ENCODE measurements at regions of chr22 and their contacts with region 1.

Region 1: GRCh38 chr22:42581762-42582716 is 28.3 kb downstream of the SERHL2 start:
- DNase-seq: peak; percentile 70 to 87 (median 76)
- ATAC-seq: peak; percentile 97
- H3K4me3 ChIP-seq: peak overlapping the region; percentile 57
- H3K27ac ChIP-seq: peak overlapping the region; percentile 74
- H3K4me1 ChIP-seq: peaks cover 0 to 7% of the 10 kb centered on the region in 2 experiments; a peak in 2 of 5 replicates
- H3K27me3 ChIP-seq: no peaks in the 10 kb centered on the region
- CTCF ChIP-seq: no peak
- EP300 ChIP-seq: no peak
- POLR2A ChIP-seq: peak; percentile 71
- RAD21 ChIP-seq: no peak

Region 2: GRCh38 chr22:42331014-42331413 is 251.0 kb before region 1 on chr22:
- CTCF ChIA-PET with region 1: no interaction called
- POLR2A ChIA-PET with region 1: no interaction called
- in situ Hi-C with region 1: no loop called
- intact Hi-C with region 1: no loop called
- DNase-seq: no peak
- ATAC-seq: peak; percentile 61; the same call in 2 of the 3 replicates
- H3K4me3 ChIP-seq: no peak overlapping the region
- H3K27ac ChIP-seq: no peak overlapping the region
- H3K4me1 ChIP-seq: peaks cover 0 to 23% of the 10 kb centered on the region in 2 experiments; a peak in 2 of 5 replicates
- H3K27me3 ChIP-seq: peaks cover 0 to 38% of the 10 kb centered on the region in 2 experiments; a peak in 2 of 5 replicates
- CTCF ChIP-seq: no peak
- EP300 ChIP-seq: no peak
- POLR2A ChIP-seq: no peak
- RAD21 ChIP-seq: no peak

Region 3: DNA sequence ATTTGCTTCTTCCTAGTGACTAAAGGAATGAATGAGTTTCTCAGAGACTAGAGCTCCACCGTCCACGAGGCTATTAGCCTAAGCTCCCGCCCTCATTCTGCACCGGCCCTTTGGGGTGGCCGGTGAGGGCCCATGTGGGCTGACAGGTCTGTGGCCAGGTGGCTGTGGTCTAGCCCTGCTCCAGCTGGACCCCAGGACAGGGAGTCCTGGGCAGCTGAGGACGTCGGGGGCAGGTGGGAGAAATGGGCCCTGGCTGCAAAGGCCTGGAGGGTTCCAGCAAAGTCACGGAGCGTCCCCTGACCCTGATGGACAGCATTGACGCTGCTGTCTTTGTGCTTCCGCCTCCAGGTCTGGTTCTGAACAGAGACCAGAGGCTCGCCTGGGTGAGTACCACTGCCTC is 16.1 kb before region 1 on chr22:
- CTCF ChIA-PET with region 1: no interaction called
- POLR2A ChIA-PET with region 1: interaction called, 10 read pairs
- in situ Hi-C with region 1: no loop called
- intact Hi-C with region 1: no loop called
- DNase-seq: peak in 1 of 4 experiments; percentile 4
- ATAC-seq: no peak
- H3K4me3 ChIP-seq: no peak overlapping the region
- H3K27ac ChIP-seq: no peak overlapping the region
- H3K4me1 ChIP-seq: peaks cover 10 to 26% of the 10 kb centered on the region in 2 experiments; a peak in 4 of 5 replicates
- H3K27me3 ChIP-seq: no peaks in the 10 kb centered on the region
- CTCF ChIP-seq: no peak
- EP300 ChIP-seq: no peak
- POLR2A ChIP-seq: no peak
- RAD21 ChIP-seq: no peak

Region 4: GRCh38 chr22:42596336-42596735 is 14.3 kb after region 1 on chr22:
- CTCF ChIA-PET with region 1: no interaction called
- POLR2A ChIA-PET with region 1: interaction called, 17 read pairs
- in situ Hi-C with region 1: no loop called
- intact Hi-C with region 1: no loop called
- DNase-seq: no peak
- ATAC-seq: no peak
- H3K4me3 ChIP-seq: no peak overlapping the region
- H3K27ac ChIP-seq: no peak overlapping the region
- H3K4me1 ChIP-seq: no peaks in the 10 kb centered on the region
- H3K27me3 ChIP-seq: no peaks in the 10 kb centered on the region
- CTCF ChIP-seq: no peak
- EP300 ChIP-seq: no peak
- POLR2A ChIP-seq: no peak
- RAD21 ChIP-seq: no peak

Region 5: GRCh38 chr22:42716649-42717127 is 134.6 kb after region 1 on chr22:
- CTCF ChIA-PET with region 1: no interaction called
- POLR2A ChIA-PET with region 1: no interaction called
- in situ Hi-C with region 1: no loop called
- intact Hi-C with region 1: no loop called
- DNase-seq: no peak
- ATAC-seq: no peak
- H3K4me3 ChIP-seq: no peak overlapping the region
- H3K27ac ChIP-seq: no peak overlapping the region
- H3K4me1 ChIP-seq: peaks cover 14 to 22% of the 10 kb centered on the region in 2 experiments; a peak in 4 of 5 replicates
- H3K27me3 ChIP-seq: peaks cover 15 to 33% of the 10 kb centered on the region in 2 experiments
- CTCF ChIP-seq: no peak
- EP300 ChIP-seq: no peak
- POLR2A ChIP-seq: no peak
- RAD21 ChIP-seq: no peak

Region 6: GRCh38 chr22:42868751-42869251 is 286.8 kb after region 1 on chr22:
- CTCF ChIA-PET with region 1: no interaction called
- POLR2A ChIA-PET with region 1: no interaction called
- in situ Hi-C with region 1: no loop called
- intact Hi-C with region 1: no loop called
- DNase-seq: no peak
- ATAC-seq: no peak
- H3K4me3 ChIP-seq: no peak overlapping the region
- H3K27ac ChIP-seq: no peak overlapping the region
- H3K4me1 ChIP-seq: peaks cover 0 to 4% of the 10 kb centered on the region in 2 experiments; a peak in 1 of 5 replicates
- H3K27me3 ChIP-seq: no peaks in the 10 kb centered on the region
- CTCF ChIP-seq: no peak
- EP300 ChIP-seq: no peak
- POLR2A ChIP-seq: no peak
- RAD21 ChIP-seq: no peak